Activated CD4-positive, alpha-beta memory T cell treated with anti-CD3 and anti-CD28 coated beads, Interleukin-2, amount 10 ng/mL, durations not matched to agents 7 days and 5 days (primary cell): ENCODE measurements at regions of chr19 and their contacts with region 1.

Region 1: GRCh38 chr19:29873024-29873800 is 61.4 kb downstream of the CCNE1 start:
- DNase-seq: peak; percentile 67
- H3K4me3 Mint-ChIP-seq: peak overlapping the region; percentile 60
- H3K27ac Mint-ChIP-seq: no peak overlapping the region
- H3K4me1 Mint-ChIP-seq: peaks cover 18% of the 10 kb centered on the region
- H3K27me3 Mint-ChIP-seq: peaks cover 24% of the 10 kb centered on the region

Region 2: GRCh38 chr19:29735800-29736199 is 137.4 kb before region 1 on chr19:
- CTCF ChIA-PET with region 1: interaction called, 49 read pairs
- POLR2A ChIA-PET with region 1: interaction called, 3 read pairs
- DNase-seq: no peak
- H3K4me3 Mint-ChIP-seq: no peak overlapping the region
- H3K27ac Mint-ChIP-seq: no peak overlapping the region
- H3K4me1 Mint-ChIP-seq: no peaks in the 10 kb centered on the region
- H3K27me3 Mint-ChIP-seq: peaks cover 3% of the 10 kb centered on the region

Region 3: GRCh38 chr19:29858000-29858596 is 15.1 kb before region 1 on chr19:
- CTCF ChIA-PET with region 1: interaction called, 15 read pairs
- POLR2A ChIA-PET with region 1: interaction called, 5 read pairs
- DNase-seq: peak; percentile 53
- H3K4me3 Mint-ChIP-seq: no peak overlapping the region
- H3K27ac Mint-ChIP-seq: no peak overlapping the region
- H3K4me1 Mint-ChIP-seq: no peaks in the 10 kb centered on the region
- H3K27me3 Mint-ChIP-seq: peaks cover 6% of the 10 kb centered on the region

Region 4: GRCh38 chr19:29953352-29954247 is 80.4 kb after region 1 on chr19:
- CTCF ChIA-PET with region 1: no interaction called
- POLR2A ChIA-PET with region 1: no interaction called
- DNase-seq: no peak
- H3K4me3 Mint-ChIP-seq: no peak overlapping the region
- H3K27ac Mint-ChIP-seq: no peak overlapping the region
- H3K4me1 Mint-ChIP-seq: peaks cover 23% of the 10 kb centered on the region
- H3K27me3 Mint-ChIP-seq: no peaks in the 10 kb centered on the region